Activated T-helper 2 cell treated with anti-CD3 and anti-CD28 coated beads, Interferon-gamma antibody, Interleukin-2, Interleukin-4, amounts not matched to agents 10 μg/mL and 5 μg/mL and 100 μg/mL, durations not matched to agents 14 hours and 24 hours and 36 hours (primary cell): ENCODE measurements at regions of chr4 and their contacts with region 1.

Region 1: GRCh38 chr4:98995183-98996055 is at the start of gene METAP1:
- DNase-seq: peak; percentile 94
- H3K4me3 Mint-ChIP-seq: peak within 1 kb of the TSS; percentile 91
- H3K27ac Mint-ChIP-seq: peak within 1 kb of the TSS; percentile 99
- H3K4me1 Mint-ChIP-seq: peaks cover 26% of the 10 kb centered on the region
- H3K27me3 Mint-ChIP-seq: no peaks in the 10 kb centered on the region
- total RNA-seq, gene METAP1: 58.2 and 58.7 TPM in 2 replicates

Region 2: DNA sequence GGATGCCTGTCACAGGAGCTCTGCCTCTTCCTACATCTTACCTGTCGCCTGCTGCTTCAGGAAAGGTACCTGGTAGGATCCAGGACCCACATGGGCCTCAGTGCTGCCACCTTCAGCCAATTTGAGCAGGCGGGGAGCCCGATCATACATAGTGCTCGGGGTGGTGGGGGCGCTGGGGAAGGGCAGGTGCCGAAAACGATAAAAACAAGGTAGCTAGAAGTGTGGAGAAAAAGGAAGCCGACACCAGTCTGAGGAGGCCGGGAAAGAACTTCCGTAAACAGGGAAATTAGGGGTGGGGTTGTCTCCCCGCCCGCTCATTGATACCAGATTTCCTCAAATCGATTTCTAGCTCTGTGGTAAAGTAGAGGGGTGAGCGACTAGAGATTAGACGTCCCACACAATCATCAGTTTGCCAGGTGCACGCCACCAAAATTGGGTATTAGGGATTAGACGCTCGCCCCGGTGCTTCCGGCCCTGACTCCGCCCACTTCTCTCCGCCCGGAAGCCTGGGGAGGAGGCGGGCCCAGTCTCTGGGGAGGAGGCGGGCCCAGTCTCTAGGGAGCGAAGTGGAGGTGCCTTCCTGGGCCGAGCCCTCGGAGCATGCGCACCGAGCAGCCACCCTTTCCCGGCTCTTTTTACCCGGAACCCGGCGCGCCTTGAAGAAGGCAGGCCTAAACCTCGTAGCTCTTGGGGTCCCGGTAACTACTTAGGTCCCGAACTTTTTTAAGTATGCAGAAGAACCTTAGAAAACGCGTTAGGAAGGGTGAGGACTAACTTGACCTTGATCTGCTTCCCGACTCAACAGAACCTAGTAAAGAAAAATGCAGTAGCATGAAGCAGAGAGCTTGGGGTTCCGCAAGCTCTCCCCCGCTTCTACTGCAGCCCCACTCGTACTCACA is 852.2 kb before region 1 on chr4 and contains the start of gene STPG2:
- intact Hi-C with region 1: loop called (anchors 2 kb)
- DNase-seq: peak; percentile 88
- H3K4me3 Mint-ChIP-seq: peak within 1 kb of the TSS; percentile 83
- H3K27ac Mint-ChIP-seq: peak within 1 kb of the TSS; percentile 90
- H3K4me1 Mint-ChIP-seq: peaks cover 26% of the 10 kb centered on the region
- H3K27me3 Mint-ChIP-seq: peaks cover 13% of the 10 kb centered on the region
- total RNA-seq, gene STPG2: not detected in 2 replicates

Region 3: DNA sequence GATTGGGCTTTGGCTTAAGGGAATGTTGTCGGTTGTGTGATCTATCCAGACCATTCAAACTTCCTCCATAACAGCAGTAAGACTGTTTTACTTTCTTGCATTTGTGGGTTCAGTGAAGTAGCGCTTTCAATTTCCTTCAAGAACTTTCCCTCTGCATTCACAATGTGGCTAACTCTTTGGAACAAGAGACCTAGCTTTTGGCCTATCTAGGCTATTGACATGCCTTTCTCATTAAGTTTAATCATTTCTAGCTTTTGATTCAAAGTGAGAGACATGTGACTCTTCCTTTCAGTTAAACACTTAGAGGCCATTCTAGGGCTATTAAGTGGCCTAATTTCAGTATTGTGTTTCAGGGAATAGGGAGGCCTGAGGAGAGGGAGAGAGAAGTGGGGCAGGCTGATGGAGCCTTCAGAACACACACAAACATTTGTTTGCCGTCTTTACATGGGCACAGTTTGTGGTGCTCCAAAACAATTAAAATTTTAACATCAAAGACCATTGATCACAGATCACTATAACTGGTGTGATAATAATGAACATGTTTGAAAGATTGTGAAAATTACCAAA is 59.1 kb after region 1 on chr4:
- intact Hi-C with region 1: loop called (anchors 1 kb)
- DNase-seq: no peak
- H3K4me3 Mint-ChIP-seq: no peak overlapping the region
- H3K27ac Mint-ChIP-seq: peak overlapping the region; percentile 75
- H3K4me1 Mint-ChIP-seq: peaks cover 41% of the 10 kb centered on the region
- H3K27me3 Mint-ChIP-seq: no peaks in the 10 kb centered on the region

Region 4: GRCh38 chr4:99159699-99160098 is 164.3 kb after region 1 on chr4:
- intact Hi-C with region 1: no loop called
- DNase-seq: no peak
- H3K4me3 Mint-ChIP-seq: no peak overlapping the region
- H3K27ac Mint-ChIP-seq: no peak overlapping the region
- H3K4me1 Mint-ChIP-seq: no peaks in the 10 kb centered on the region
- H3K27me3 Mint-ChIP-seq: no peaks in the 10 kb centered on the region

Region 5: DNA sequence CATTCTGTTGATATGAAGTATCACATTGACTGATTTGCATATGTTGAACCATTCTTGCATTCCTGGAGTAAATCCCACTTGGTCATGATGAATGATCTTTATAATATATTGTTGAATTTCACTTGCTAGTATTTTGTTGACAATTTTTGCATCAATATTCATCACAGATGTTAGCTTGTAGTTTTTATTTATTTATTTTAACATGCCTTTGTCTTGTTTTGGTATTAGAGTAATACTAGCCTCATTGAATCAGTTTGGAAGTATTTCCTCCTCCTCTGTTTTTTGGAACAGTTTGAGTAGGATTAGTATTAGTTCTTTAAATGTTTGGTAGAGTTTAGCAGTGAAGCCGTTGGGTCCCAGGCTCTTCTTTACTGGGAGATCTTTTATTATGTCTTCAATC is 371.1 kb after region 1 on chr4:
- intact Hi-C with region 1: no loop called
- DNase-seq: no peak
- H3K4me3 Mint-ChIP-seq: no peak overlapping the region
- H3K27ac Mint-ChIP-seq: no peak overlapping the region
- H3K4me1 Mint-ChIP-seq: no peaks in the 10 kb centered on the region
- H3K27me3 Mint-ChIP-seq: peaks cover 2% of the 10 kb centered on the region

Region 6: GRCh38 chr4:99405433-99406115 is 410.2 kb after region 1 on chr4:
- intact Hi-C with region 1: loop called (anchors 2 kb)
- DNase-seq: peak; percentile 13
- H3K4me3 Mint-ChIP-seq: no peak overlapping the region
- H3K27ac Mint-ChIP-seq: no peak overlapping the region
- H3K4me1 Mint-ChIP-seq: peaks cover 21% of the 10 kb centered on the region
- H3K27me3 Mint-ChIP-seq: peaks cover 10% of the 10 kb centered on the region

Region 7: GRCh38 chr4:99949034-99949998 is 953.9 kb after region 1 on chr4:
- intact Hi-C with region 1: loop called (anchors 10 kb)
- DNase-seq: peak; percentile 87
- H3K4me3 Mint-ChIP-seq: no peak overlapping the region
- H3K27ac Mint-ChIP-seq: no peak overlapping the region
- H3K4me1 Mint-ChIP-seq: peaks cover 31% of the 10 kb centered on the region
- H3K27me3 Mint-ChIP-seq: no peaks in the 10 kb centered on the region